ENCODE measurements at regions of chr5 and their contacts with region 1.

Region 1: GRCh38 chr5:148443998-148444397 is 60.2 kb downstream of the FBXO38 start:
- DNase-seq: peak; percentile 48 to 78 (median 50)
- ATAC-seq: peak; percentile 97
- H3K4me3 ChIP-seq: no peak overlapping the region
- H3K27ac ChIP-seq: no peak overlapping the region
- H3K4me1 ChIP-seq: no peaks in the 10 kb centered on the region
- H3K27me3 ChIP-seq: no peaks in the 10 kb centered on the region
- CTCF ChIP-seq: peak; percentile 70 to 90 (median 80)
- EP300 ChIP-seq: 0 out of 2 replicates have a peak, but pooled peaks have one; percentile 5
- POLR2A ChIP-seq: no peak
- RAD21 ChIP-seq: peak; percentile 89 to 94

Region 2: DNA sequence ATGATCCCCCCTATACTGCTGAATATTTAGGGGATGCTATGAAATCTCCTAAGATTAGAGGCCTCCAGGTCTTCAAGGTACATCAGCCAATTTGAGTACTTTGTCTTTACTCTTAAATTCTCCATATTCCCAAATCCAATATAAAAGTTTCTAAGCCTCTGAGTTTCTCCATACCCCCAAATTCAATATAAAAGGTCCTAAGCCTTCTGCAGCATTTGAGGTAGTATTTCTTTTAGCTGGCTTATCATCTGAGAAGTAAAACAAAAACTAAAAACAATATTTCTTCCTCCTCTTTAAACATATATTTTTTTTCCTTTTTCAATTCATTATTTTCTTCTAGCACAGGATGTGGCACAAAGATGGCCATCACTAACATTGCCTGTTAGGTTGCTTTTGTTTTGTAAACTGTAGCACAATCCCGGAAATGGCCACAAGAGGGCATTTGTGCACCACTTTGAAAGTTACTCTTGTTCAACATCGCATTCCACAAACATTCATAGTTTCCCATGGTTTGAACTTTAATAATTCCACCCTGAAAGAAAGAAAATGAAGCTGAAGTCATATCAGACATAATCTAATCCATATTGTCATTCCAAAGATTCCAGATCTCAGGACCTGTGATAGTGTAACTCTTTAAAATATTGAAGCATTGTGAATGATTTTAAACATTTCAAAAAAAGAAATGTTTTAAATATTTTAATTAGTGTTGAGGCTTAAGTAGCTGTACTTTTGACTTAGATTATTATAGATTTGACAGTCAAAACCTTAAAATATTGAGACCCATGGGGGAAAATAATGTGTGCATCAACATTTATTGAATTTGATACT is 586.5 kb before region 1 on chr5:
- CTCF ChIA-PET with region 1: no interaction called
- POLR2A ChIA-PET with region 1: no interaction called
- in situ Hi-C with region 1: no loop called
- intact Hi-C with region 1: loop called (anchors 10 kb)
- DNase-seq: peak; percentile 31 to 66 (median 58)
- ATAC-seq: peak; percentile 72
- H3K4me3 ChIP-seq: no peak overlapping the region
- H3K27ac ChIP-seq: no peak overlapping the region
- H3K4me1 ChIP-seq: no peaks in the 10 kb centered on the region
- H3K27me3 ChIP-seq: no peaks in the 10 kb centered on the region
- CTCF ChIP-seq: peak; percentile 60 to 68 (median 66)
- EP300 ChIP-seq: no peak
- POLR2A ChIP-seq: no peak
- RAD21 ChIP-seq: peak; percentile 71

Region 3: DNA sequence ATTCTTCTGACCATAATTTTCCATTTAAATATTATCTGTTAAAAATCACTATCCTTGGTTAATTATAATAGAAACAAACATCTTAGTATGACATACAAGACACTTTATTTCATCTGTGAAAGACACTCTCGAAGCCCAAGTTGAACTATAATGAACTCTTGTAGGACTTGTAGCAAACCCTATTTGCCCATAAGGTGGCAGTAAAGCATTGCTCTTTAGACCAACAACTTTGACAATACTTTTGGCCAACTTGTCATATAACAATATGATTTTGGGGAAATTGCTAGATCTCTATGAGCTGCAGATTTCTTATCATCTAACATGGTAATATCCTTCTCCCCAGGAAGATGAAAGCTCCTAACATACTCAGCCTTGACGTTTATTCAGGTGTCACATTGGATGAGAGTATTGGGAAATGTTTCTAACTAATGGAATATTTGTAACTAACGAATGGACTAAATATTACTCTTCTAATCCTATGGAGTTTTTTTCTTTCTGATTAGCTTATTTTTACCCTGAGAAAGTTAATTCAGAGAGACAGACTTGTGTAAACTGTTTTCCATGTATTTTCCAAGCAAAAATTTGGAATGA is 264.7 kb before region 1 on chr5:
- CTCF ChIA-PET with region 1: interaction called, 3 read pairs
- POLR2A ChIA-PET with region 1: no interaction called
- in situ Hi-C with region 1: no loop called
- intact Hi-C with region 1: loop called (anchors 2 kb)
- DNase-seq: peak in 3 of 4 experiments; percentile 6 to 67 (median 6)
- ATAC-seq: peak; percentile 67; the same call in 2 of the 3 replicates
- H3K4me3 ChIP-seq: no peak overlapping the region
- H3K27ac ChIP-seq: no peak overlapping the region
- H3K4me1 ChIP-seq: no peaks in the 10 kb centered on the region
- H3K27me3 ChIP-seq: no peaks in the 10 kb centered on the region
- CTCF ChIP-seq: peak; percentile 48 to 71 (median 61); a peak in 5 of 6 replicates
- EP300 ChIP-seq: no peak
- POLR2A ChIP-seq: no peak
- RAD21 ChIP-seq: peak; percentile 89

Region 4: DNA sequence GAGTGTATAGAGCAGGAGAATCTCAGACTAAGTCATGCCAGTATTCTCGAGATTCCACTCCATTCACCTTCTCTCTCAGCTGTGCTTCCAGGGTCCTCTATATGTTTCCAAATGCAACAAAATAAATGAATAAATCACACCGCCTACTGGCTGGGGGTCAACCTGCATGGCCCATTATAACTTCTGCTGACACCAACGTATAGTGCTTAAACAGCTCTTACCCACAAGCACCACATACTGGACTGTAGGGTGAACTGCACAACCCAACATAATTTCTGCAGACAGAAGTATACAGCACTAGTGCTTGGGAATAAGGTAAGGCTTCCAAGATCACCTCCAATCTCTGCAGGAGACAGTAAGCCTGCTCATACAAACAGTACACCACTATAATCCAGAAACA is 243.4 kb after region 1 on chr5:
- CTCF ChIA-PET with region 1: interaction called, 33 read pairs
- POLR2A ChIA-PET with region 1: interaction called, 4 read pairs
- in situ Hi-C with region 1: loop called (anchors 5 kb)
- intact Hi-C with region 1: loop called (anchors 1 kb)
- DNase-seq: peak; percentile 72 to 85 (median 75)
- ATAC-seq: peak; percentile 97
- H3K4me3 ChIP-seq: no peak overlapping the region
- H3K27ac ChIP-seq: no peak overlapping the region
- H3K4me1 ChIP-seq: peaks cover 0 to 25% of the 10 kb centered on the region in 2 experiments; a peak in 3 of 5 replicates
- H3K27me3 ChIP-seq: no peaks in the 10 kb centered on the region
- CTCF ChIP-seq: peak; percentile 96 to 99 (median 99)
- EP300 ChIP-seq: peak; percentile 13; the same call in 1 of the 2 replicates
- POLR2A ChIP-seq: no peak
- RAD21 ChIP-seq: peak; percentile 62 to 98

Region 5: DNA sequence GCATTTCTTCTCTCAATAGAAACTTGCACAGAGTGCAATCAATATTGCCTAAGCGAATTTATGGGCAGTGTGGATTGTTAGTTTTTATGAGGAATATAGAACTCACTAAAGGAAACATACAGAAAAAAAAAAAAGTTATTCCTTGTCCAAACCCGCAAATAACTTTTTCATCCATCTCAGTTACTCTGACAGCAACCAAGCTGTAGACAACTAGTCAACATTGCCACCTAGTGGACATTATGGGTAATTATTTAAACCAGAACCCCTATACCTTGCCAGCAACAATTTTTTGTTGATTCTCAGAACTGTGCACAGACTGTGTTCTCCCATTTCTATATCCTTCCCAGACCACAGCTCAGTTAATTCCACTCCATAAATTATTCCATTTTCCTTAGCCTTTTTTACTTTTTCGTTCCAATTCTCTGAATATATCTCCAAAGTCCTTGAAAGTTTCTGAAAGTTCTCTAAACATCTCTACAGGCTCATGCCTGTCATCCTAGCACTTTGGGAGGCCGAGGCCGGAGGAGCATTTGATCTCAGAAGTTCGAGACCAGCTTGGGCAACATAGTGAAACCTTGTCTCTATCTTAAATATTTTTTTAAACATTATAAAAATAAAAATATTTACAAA is 825.0 kb after region 1 on chr5:
- CTCF ChIA-PET with region 1: interaction called, 4 read pairs
- POLR2A ChIA-PET with region 1: no interaction called
- in situ Hi-C with region 1: loop called (anchors 25 kb)
- intact Hi-C with region 1: no loop called
- DNase-seq: peak; percentile 69 to 77 (median 74)
- ATAC-seq: peak; percentile 82
- H3K4me3 ChIP-seq: no peak overlapping the region
- H3K27ac ChIP-seq: no peak overlapping the region
- H3K4me1 ChIP-seq: peaks cover 0 to 12% of the 10 kb centered on the region in 2 experiments; a peak in 2 of 5 replicates
- H3K27me3 ChIP-seq: peaks cover 12 to 48% of the 10 kb centered on the region in 2 experiments; a peak in 3 of 5 replicates
- CTCF ChIP-seq: peak; percentile 62 to 83 (median 72); a peak in 5 of 6 replicates
- EP300 ChIP-seq: no peak
- POLR2A ChIP-seq: no peak
- RAD21 ChIP-seq: peak; percentile 81 to 85

Measured in K562 (cell line).